Sciatic nerve (tissue), 2 donors: ENCODE measurements at regions of chr11 and their contacts with region 1.

Region 1: DNA sequence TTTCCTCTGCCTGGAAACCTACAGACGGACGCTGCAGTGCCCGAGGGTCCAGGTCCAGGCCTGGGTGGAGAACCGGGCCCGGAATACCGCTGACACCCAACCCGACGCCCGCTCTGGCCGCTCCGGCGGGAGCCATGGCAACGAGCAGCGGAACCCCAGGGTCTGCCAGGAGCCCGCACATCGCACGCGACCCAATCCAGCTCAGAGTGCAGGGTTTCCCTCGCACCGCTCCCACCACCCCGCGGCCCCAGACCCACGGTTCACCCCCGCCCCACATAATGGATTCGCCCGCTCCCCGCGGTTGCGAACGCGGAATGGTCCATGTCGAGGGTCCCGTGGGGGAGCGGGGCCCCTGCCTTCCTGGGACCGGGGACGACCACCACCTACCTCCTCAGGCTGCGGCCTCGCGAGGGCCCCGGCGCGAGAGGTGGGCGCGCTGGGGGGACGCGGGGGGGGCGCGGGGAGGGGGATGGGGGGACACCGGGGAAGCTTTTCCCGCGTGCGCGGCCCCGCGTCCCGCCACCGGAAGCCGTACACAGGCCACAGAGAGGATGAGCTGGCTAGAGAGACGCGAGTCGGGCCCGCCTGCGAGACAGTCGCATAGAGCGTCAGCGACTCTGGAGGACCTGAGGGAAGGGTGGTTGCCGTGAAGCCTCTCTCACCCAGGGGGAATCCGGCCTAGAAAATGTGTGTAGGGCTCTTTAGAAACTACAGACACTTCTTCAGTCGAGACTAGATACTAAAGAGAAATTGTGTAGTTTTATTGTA is at the start of gene SSRP1:
- DNase-seq: peak; percentile 92
- ATAC-seq: peak; percentile 97
- total RNA-seq, gene SSRP1: 54.9 TPM

Region 2: GRCh38 chr11:57644748-57645688 is 309.5 kb after region 1 on chr11:
- intact Hi-C with region 1: loop called (anchors 10 kb)
- DNase-seq: peak; percentile 90
- ATAC-seq: peak; percentile 75

Region 3: GRCh38 chr11:58451585-58451984 is 1116.1 kb after region 1 on chr11:
- intact Hi-C with region 1: no loop called
- DNase-seq: no peak
- ATAC-seq: no peak